Gastrocnemius medialis (tissue), 4 donors: ENCODE measurements at regions of chr2 and their contacts with region 1.

Region 1: GRCh38 chr2:217622205-217623060 is 380.4 kb downstream of the TNS1 start:
- DNase-seq: no peak
- ATAC-seq: peak in 1 of 2 donors; percentile 51
- H3K4me3 ChIP-seq: no peak overlapping the region
- H3K27ac ChIP-seq: peak overlapping the region in 2 of 4 donors; percentile 12 to 19
- H3K4me1 ChIP-seq: peaks cover 10 to 14% of the 10 kb centered on the region in 2 donors
- H3K27me3 ChIP-seq: no peaks in the 10 kb centered on the region
- CTCF ChIP-seq: no peak
- POLR2A ChIP-seq: no peak

Region 2: DNA sequence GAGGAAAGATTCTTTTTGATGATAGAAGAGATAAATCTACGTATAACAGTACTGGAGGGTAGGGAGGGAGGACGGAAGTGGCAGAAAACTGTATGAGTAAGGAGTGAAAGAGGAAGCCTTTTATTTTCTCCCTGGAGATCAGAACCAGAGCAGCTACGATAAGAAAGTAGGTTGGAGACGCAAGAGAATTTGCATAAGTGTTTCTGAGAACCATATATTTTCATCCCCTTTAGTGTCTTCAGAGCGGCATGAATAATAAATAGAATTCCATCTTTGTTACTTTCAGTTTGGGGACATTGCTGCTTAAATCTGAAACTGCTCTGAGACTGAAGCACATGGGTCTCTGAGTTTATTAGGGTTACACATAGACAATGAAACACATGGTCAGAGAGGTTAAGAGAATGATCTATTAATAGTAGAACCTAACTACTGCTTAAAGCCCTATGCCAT is 532.4 kb before region 1 on chr2:
- in situ Hi-C with region 1: no loop called
- intact Hi-C with region 1: loop called (anchors 5 kb)
- DNase-seq: no peak
- ATAC-seq: no peak
- H3K4me3 ChIP-seq: peak overlapping the region in 1 of 4 donors; percentile 1
- H3K27ac ChIP-seq: no peak overlapping the region
- H3K4me1 ChIP-seq: peaks cover 0 to 15% of the 10 kb centered on the region in 2 donors
- H3K27me3 ChIP-seq: no peaks in the 10 kb centered on the region
- CTCF ChIP-seq: no peak
- POLR2A ChIP-seq: no peak

Region 3: DNA sequence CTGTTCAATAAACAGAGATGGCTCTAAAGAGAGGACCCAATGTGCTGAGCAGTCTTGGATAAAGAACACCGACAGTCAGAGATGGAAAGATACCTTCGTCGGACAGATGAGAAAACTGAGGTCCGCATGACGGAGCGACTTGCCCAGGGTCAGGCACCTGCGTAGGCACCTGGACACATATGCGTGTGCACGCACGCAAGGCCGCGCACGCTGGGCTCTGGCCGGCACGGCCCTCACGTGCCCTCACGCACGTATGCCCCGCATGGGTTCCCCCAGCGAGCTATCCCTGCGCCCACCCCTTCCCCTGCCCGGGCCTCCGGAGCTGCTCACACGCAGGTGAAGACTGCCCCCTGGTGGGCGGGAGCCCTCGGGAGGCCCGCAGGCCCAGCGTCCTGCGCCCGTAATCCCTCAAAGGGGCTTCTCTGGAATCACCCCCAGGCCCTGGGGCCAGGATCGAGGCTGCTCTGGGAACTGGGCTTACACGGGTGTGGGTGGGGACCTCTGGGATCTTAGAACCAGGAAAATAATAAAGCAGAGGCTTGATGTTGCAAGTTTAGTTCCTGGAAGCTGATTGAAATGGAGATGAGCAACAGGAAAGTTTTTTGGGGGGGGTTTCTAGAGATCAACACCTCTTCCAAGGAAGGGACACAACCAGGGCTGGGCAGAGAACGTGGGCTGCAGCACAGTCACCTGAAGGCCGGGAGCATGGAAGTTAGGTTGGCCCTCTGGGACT is 134.1 kb after region 1 on chr2:
- in situ Hi-C with region 1: no loop called
- intact Hi-C with region 1: no loop called
- DNase-seq: peak in 1 of 2 donors; percentile 39
- ATAC-seq: peak; percentile 40 to 60
- H3K4me3 ChIP-seq: peak overlapping the region in 3 of 4 donors; percentile 19 to 29 (median 26)
- H3K27ac ChIP-seq: no peak overlapping the region
- H3K4me1 ChIP-seq: peaks cover 4 to 7% of the 10 kb centered on the region in 2 donors
- H3K27me3 ChIP-seq: no peaks in the 10 kb centered on the region
- CTCF ChIP-seq: peak; percentile 57 to 92 (median 87)
- POLR2A ChIP-seq: no peak